ENCODE measurements at regions of chr3 and their contacts with region 1.

Region 1: DNA sequence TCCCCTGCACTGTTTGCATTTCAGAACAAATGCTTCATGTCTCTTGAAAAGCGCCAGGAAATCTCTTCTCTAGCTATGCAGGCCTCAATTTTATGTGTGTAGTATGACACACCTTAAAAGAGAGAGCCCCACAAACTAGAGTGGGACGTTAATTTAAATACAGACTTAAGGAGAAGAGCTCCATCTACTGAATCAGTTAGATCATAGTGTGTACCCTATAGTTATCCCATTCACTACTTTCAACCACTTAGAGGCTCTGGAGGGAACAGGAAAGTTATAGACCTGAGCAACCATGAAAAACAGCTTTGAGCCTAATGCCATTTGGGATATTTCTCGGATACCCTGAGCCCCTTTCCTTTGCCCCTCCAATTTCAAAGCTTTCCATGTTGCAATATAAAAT is 153.7 kb downstream of the TIGIT start:
- DNase-seq: no peak

Region 2: DNA sequence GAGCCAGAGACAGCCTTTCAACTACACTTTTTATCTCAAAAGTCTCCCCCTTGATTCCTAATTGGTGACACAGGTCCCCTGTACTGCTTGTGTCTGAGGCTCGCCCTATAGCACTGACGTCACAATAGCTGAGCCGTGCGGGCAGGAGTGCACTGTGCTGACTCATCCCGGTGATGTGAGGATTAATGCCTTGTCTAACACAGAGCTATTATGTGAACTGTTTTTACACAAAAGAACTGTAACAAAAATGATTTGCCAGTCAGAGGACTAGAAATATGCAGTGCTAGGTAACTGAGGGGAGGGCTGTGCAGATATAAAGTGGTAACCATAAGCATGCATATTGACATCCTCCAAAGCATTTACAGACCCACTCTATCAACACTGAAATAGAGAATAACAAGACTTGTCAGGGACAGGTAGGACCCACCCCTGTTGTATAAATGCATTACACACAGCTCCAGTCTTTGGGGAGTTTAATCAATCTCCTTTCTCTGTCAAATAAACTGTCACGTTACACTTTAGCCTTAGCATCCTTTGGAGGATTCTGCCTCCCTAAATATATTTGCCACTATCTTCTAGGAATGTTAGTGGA is 51.3 kb after region 1 on chr3:
- intact Hi-C with region 1: loop called in 1 of 2 experiments (anchors 5 kb)
- DNase-seq: no peak

Measured in posterior vena cava (tissue), 2 donors.